Common myeloid progenitor, CD34-positive (primary cell): ENCODE measurements at regions of chr3 and their contacts with region 1.

Region 1: DNA sequence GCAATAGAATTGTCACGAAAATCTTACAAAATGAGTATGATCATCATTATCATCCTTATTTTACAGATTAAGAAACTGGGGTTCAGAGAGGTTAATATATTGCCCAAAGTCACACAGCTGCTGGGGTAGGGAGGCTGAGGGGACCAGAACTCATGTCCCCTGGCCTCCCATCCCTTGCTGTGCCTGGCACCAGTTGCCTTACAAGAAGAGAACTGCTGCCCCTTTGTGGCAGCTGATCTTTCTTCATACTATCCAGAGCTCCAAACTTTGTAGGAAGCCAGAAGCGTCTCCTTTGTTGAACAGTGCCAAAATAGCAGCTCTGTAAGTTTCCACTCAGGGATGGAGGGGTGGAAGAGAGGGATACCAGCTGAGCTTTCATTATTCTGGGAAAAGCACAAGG is 236.8 kb upstream of the TBC1D5 start:
- DNase-seq: peak; percentile 49 to 82 (median 74)
- H3K4me3 ChIP-seq: peak overlapping the region in 3 of 7 experiments; percentile 31 to 43 (median 39)
- H3K27ac ChIP-seq: no peak overlapping the region
- H3K4me1 ChIP-seq: peaks cover 41 to 77% (median 56%) of the 10 kb centered on the region in 4 experiments
- H3K27me3 ChIP-seq: no peaks in the 10 kb centered on the region

Region 2: DNA sequence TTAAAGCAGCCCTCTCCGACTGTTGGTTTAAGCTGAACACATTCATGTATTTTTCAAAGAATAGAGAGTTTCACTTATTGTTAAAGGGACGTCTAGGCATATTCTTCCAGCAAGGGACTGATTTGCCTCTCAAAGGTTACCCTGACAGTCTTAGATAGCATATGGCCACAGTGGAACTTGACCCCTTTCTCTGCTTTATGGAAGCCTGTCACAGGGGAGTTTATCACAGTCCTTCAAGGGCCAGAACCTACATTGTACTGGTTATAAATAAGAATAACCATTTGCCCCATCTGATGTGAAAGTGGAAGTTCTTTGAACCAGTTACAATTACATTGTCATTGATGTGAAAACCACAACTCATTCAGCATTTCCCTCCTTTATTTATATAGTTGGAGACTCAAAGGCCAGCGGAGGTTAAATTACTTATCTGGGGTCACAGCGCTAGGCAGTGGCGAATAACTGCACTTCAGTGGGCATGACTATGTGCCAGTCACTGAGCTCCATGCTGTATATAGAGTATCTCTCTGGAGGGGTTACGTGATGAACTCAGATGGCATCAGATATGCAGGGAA is 176.3 kb before region 1 on chr3:
- CTCF ChIA-PET with region 1: no interaction called
- POLR2A ChIA-PET with region 1: no interaction called
- DNase-seq: peak in 1 of 3 donors; percentile 4
- H3K4me3 ChIP-seq: no peak overlapping the region
- H3K27ac ChIP-seq: no peak overlapping the region
- H3K4me1 ChIP-seq: no peaks in the 10 kb centered on the region
- H3K27me3 ChIP-seq: no peaks in the 10 kb centered on the region

Region 3: DNA sequence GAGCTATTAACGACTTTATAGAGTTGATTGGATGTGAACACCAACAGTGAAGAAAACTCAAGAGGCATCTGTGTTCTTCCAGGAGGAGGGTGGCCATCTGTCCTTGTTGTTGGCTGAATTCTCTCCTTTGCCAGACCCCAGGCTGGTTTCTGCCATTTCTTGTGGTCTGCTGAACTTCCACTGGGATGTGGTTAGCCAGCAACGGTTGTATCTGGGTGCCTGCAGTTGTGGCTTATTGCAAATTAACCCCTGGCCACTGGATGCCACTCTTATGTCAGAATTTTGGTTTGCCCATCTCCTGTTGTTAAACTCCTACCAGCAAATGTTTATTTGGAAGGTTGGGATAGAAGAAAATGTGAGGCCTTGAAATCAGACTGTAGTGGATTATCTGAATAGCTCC is 73.3 kb before region 1 on chr3:
- CTCF ChIA-PET with region 1: interaction called, 10 read pairs
- POLR2A ChIA-PET with region 1: no interaction called
- DNase-seq: peak; percentile 83 to 95 (median 93)
- H3K4me3 ChIP-seq: no peak overlapping the region
- H3K27ac ChIP-seq: peak overlapping the region in 1 of 2 experiments; percentile 19
- H3K4me1 ChIP-seq: peaks cover 20 to 66% (median 46%) of the 10 kb centered on the region in 4 experiments
- H3K27me3 ChIP-seq: no peaks in the 10 kb centered on the region

Region 4: GRCh38 chr3:18018491-18019160 is 39.4 kb after region 1 on chr3:
- CTCF ChIA-PET with region 1: no interaction called
- POLR2A ChIA-PET with region 1: no interaction called
- DNase-seq: no peak
- H3K4me3 ChIP-seq: no peak overlapping the region
- H3K27ac ChIP-seq: no peak overlapping the region
- H3K4me1 ChIP-seq: no peaks in the 10 kb centered on the region
- H3K27me3 ChIP-seq: no peaks in the 10 kb centered on the region

Region 5: GRCh38 chr3:18791182-18791581 is 811.9 kb after region 1 on chr3:
- CTCF ChIA-PET with region 1: no interaction called
- POLR2A ChIA-PET with region 1: interaction called, 10 read pairs
- DNase-seq: no peak
- H3K4me3 ChIP-seq: no peak overlapping the region
- H3K27ac ChIP-seq: no peak overlapping the region
- H3K4me1 ChIP-seq: no peaks in the 10 kb centered on the region
- H3K27me3 ChIP-seq: no peaks in the 10 kb centered on the region